ENCODE measurements at regions of chr5 and their contacts with region 1.

Region 1: DNA sequence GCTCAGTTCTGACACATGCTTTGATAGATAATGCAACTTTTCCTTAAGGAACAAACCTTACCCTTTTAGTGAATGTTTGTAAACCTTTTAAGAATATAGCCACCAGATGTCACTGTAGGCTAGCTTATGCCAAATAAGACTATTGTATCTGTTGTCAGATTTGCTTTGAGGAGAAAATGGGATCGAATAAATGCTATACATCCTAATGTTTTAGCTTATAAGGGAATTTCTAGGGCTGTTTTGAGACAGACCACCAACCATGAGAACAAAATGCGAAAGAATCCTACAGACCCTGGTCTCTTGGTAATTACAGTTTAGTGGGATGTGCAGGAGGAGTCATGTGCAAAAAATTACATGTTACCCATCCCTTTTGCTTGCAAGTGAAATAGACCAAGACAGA is 127.6 kb upstream of the NMUR2 start:
- DNase-seq: no peak
- H3K4me3 Mint-ChIP-seq: no peak overlapping the region
- H3K27ac Mint-ChIP-seq: no peak overlapping the region
- H3K4me1 Mint-ChIP-seq: peaks cover 9% of the 10 kb centered on the region
- H3K27me3 Mint-ChIP-seq: peaks cover 4% of the 10 kb centered on the region

Region 2: GRCh38 chr5:153964880-153965645 is 1432.3 kb after region 1 on chr5:
- CTCF ChIA-PET with region 1: interaction called, 16 read pairs
- POLR2A ChIA-PET with region 1: no interaction called
- DNase-seq: peak; percentile 49
- H3K4me3 Mint-ChIP-seq: no peak overlapping the region
- H3K27ac Mint-ChIP-seq: no peak overlapping the region
- H3K4me1 Mint-ChIP-seq: peaks cover 9% of the 10 kb centered on the region
- H3K27me3 Mint-ChIP-seq: peaks cover 10% of the 10 kb centered on the region